ENCODE measurements at regions of chr1 and their contacts with region 1.

Region 1: GRCh38 chr1:101309334-101310311 is 72.8 kb downstream of the S1PR1 start:
- DNase-seq: no peak
- H3K4me3 ChIP-seq: peak overlapping the region; percentile 46
- CTCF ChIP-seq: peak; percentile 86

Region 2: DNA sequence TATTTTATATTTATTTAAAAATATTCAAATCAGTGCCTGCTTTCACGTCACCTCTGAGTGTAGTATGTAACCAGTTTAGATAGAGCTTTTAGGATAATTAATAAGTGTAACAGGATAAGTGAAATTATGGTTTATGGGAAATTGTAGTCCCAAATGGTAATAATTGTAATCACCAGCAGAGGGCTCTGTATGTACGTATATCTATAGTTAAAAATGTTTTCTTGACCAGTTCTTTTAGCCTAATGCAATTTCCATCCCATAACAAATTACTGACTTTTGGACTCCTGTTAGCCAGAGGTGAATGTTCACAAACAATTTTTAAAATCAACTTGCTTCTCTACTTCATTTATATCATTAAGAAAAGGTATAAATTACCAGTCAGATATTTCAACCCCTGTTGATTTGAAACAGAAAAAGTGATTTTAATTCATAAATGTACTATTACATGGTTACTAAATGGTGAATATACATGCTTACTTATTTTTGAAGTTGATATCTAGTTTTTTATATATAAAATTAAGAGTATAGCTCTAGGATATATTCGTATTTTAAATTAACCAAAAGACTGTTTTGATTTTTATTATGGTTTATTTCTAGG is 388.4 kb before region 1 on chr1:
- CTCF ChIA-PET with region 1: interaction called, 11 read pairs
- POLR2A ChIA-PET with region 1: no interaction called
- DNase-seq: no peak
- H3K4me3 ChIP-seq: no peak overlapping the region
- CTCF ChIP-seq: peak; percentile 33

Region 3: GRCh38 chr1:101148980-101149379 is 160.6 kb before region 1 on chr1:
- CTCF ChIA-PET with region 1: no interaction called
- POLR2A ChIA-PET with region 1: no interaction called
- DNase-seq: no peak
- H3K4me3 ChIP-seq: no peak overlapping the region
- CTCF ChIP-seq: no peak

Region 4: DNA sequence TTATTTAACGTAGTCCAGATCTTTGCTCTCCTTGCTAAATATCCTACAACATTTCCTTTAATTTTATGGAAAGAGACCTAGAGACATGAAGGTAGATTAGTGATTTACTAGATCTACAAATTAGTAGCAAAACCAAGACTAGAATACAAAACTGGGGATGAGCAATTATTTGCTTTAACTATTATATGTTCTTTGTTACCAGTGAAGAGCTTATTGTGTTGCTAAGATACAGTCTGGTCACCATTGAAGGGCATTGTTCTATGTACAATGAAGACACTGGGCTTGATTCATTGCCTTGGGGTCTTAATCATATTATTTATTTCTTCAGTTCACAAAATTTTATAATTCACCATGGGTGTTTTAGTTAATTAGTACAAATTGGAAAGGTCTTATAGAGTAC is 15.5 kb after region 1 on chr1:
- CTCF ChIA-PET with region 1: interaction called, 12 read pairs
- POLR2A ChIA-PET with region 1: interaction called, 3 read pairs
- DNase-seq: no peak
- H3K4me3 ChIP-seq: no peak overlapping the region
- CTCF ChIP-seq: no peak

Region 5: DNA sequence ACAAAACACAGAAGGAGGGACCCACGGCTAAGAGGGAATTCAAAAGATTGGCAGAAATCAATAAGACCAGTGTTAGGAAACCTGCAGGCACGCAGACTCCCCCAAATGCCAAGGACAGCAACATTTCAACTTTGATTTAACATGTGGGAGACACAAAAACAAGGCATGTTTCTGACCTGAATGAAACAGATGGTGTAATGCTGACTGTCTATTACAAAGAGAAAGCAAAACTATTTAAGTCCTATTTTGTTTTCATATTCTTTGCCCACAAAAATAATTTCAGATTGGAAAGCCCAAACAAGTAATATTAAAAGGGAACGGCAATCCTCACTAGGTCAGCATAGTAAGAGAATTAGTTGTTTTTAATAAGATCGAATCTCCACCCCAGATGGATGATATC is 35.1 kb after region 1 on chr1:
- CTCF ChIA-PET with region 1: interaction called, 21 read pairs
- POLR2A ChIA-PET with region 1: no interaction called
- DNase-seq: no peak
- H3K4me3 ChIP-seq: no peak overlapping the region
- CTCF ChIP-seq: no peak

Region 6: DNA sequence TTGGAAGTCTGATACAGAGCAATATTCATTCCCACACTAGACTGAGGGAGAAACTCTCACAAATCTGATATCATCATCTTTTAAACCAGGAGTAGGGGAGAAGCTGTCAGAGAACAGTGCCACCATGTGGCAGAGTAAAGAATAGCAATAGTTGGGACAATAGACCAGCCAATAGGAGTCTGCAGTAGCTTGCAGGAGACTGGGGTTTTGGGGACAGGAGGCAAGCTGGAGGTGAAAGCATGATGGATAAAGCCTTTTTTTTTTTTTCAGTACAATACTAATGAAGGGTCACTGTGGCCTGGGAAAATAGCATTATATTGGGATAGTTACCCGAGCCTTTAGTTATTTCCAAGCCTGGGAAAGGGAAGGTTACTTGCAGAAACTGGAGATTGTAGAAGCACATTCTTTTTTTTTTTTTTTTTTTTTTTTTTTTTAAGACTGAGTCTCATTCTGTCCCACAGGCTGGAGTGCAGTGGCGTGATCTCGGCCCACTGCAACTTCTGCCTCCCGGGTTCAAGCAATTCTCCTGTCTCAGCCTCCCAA is 47.9 kb after region 1 on chr1:
- CTCF ChIA-PET with region 1: interaction called, 83 read pairs
- POLR2A ChIA-PET with region 1: no interaction called
- DNase-seq: no peak
- H3K4me3 ChIP-seq: no peak overlapping the region
- CTCF ChIP-seq: peak; percentile 62

Region 7: GRCh38 chr1:101366513-101367215 is 57.0 kb after region 1 on chr1:
- CTCF ChIA-PET with region 1: interaction called, 17 read pairs
- POLR2A ChIA-PET with region 1: no interaction called
- DNase-seq: no peak
- H3K4me3 ChIP-seq: no peak overlapping the region
- CTCF ChIP-seq: no peak

Region 8: DNA sequence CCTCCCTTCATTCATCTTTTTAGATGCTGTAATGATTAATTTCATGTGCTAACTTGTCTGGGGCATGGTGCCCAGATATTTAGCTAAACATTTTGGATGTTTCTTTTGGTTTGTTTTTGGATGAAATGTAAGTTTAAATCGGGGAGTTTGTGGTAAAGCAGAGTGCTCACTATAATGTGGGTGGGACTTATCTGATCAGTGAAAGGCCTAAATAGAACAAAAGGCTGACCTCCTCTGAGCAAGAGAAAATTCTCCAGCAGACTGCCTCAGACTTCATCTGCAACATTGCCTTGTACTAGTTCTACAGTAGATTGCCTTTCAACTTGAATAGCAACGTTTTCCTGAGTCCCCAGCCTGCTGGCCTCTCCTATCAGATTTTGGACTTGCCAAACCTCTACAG is 110.8 kb after region 1 on chr1:
- CTCF ChIA-PET with region 1: no interaction called
- POLR2A ChIA-PET with region 1: no interaction called
- DNase-seq: no peak
- H3K4me3 ChIP-seq: no peak overlapping the region
- CTCF ChIP-seq: no peak

Region 9: GRCh38 chr1:101438359-101438758 is 128.7 kb after region 1 on chr1:
- CTCF ChIA-PET with region 1: interaction called, 44 read pairs
- POLR2A ChIA-PET with region 1: no interaction called
- DNase-seq: no peak
- H3K4me3 ChIP-seq: no peak overlapping the region
- CTCF ChIP-seq: no peak

Measured in AG04449 (cell line).